ENCODE measurements at regions of chrX and their contacts with region 1.

Region 1: DNA sequence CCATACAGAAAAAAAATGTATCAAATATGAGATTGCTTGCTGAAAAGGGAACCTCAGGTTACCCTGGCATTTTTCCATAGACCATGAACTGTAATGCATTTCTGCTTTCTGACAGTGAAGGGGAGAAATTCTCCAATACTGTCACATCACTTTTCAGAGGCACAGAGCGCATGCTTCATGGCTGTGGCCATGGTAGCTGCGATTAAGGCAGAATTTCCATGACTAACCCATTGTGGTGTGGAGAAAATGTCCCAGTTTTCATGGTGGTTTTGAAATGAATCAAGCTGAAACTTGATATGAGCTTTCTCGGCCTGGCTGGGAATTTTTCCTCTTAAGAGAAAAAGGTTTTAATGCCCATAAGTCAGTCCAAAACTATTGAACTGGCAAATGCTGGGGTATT is 39.5 kb upstream of the MAP3K15 start:
- DNase-seq: no peak
- H3K4me3 ChIP-seq: no peak overlapping the region
- H3K27ac ChIP-seq: no peak overlapping the region
- H3K4me1 ChIP-seq: no peaks in the 10 kb centered on the region
- H3K27me3 ChIP-seq: no peaks in the 10 kb centered on the region
- CTCF ChIP-seq: no peak
- EP300 ChIP-seq: no peak
- POLR2A ChIP-seq: no peak

Region 2: GRCh38 chrX:19517965-19518364 is 36.8 kb before region 1 on chrX:
- in situ Hi-C with region 1: no loop called
- intact Hi-C with region 1: loop called (anchors 1 kb)
- DNase-seq: no peak
- H3K4me3 ChIP-seq: no peak overlapping the region
- H3K27ac ChIP-seq: no peak overlapping the region
- H3K4me1 ChIP-seq: peaks cover 0 to 7% (median 0%) of the 10 kb centered on the region in 4 donors
- H3K27me3 ChIP-seq: peaks cover 23% of the 10 kb centered on the region
- CTCF ChIP-seq: no peak
- EP300 ChIP-seq: no peak
- POLR2A ChIP-seq: no peak

Measured in transverse colon (tissue), 4 donors.